PC-9 (cell line): ENCODE measurements at regions of chr1 and their contacts with region 1.

Region 1: GRCh38 chr1:38026592-38027200 is 14.2 kb downstream of the UTP11 start:
- DNase-seq: peak; percentile 58 to 75
- H3K4me3 ChIP-seq: no peak overlapping the region
- H3K27ac ChIP-seq: no peak overlapping the region
- H3K4me1 ChIP-seq: peaks cover 48% of the 10 kb centered on the region
- H3K27me3 ChIP-seq: no peaks in the 10 kb centered on the region
- CTCF ChIP-seq: peak; percentile 91

Region 2: GRCh38 chr1:36232212-36233095 is 1794.2 kb before region 1 on chr1:
- CTCF ChIA-PET with region 1: interaction called, 11 read pairs
- POLR2A ChIA-PET with region 1: no interaction called
- intact Hi-C with region 1: no loop called
- DNase-seq: no peak
- H3K4me3 ChIP-seq: no peak overlapping the region
- H3K27ac ChIP-seq: no peak overlapping the region
- H3K4me1 ChIP-seq: no peaks in the 10 kb centered on the region
- H3K27me3 ChIP-seq: no peaks in the 10 kb centered on the region
- CTCF ChIP-seq: no peak

Region 3: GRCh38 chr1:38138498-38139233 is 112.0 kb after region 1 on chr1:
- CTCF ChIA-PET with region 1: no interaction called
- POLR2A ChIA-PET with region 1: no interaction called
- intact Hi-C with region 1: loop called (anchors 5 kb)
- DNase-seq: peak; percentile 99
- H3K4me3 ChIP-seq: no peak overlapping the region; the same call in 1 of the 2 replicates
- H3K27ac ChIP-seq: peak overlapping the region; percentile 48
- H3K4me1 ChIP-seq: peaks cover 58% of the 10 kb centered on the region
- H3K27me3 ChIP-seq: no peaks in the 10 kb centered on the region
- CTCF ChIP-seq: no peak

Region 4: GRCh38 chr1:38152351-38153065 is 125.8 kb after region 1 on chr1:
- CTCF ChIA-PET with region 1: no interaction called
- POLR2A ChIA-PET with region 1: no interaction called
- intact Hi-C with region 1: loop called (anchors 2 kb)
- DNase-seq: no peak
- H3K4me3 ChIP-seq: no peak overlapping the region
- H3K27ac ChIP-seq: no peak overlapping the region
- H3K4me1 ChIP-seq: no peaks in the 10 kb centered on the region
- H3K27me3 ChIP-seq: peaks cover 47% of the 10 kb centered on the region
- CTCF ChIP-seq: peak; percentile 58; the same call in 1 of the 2 replicates

Region 5: DNA sequence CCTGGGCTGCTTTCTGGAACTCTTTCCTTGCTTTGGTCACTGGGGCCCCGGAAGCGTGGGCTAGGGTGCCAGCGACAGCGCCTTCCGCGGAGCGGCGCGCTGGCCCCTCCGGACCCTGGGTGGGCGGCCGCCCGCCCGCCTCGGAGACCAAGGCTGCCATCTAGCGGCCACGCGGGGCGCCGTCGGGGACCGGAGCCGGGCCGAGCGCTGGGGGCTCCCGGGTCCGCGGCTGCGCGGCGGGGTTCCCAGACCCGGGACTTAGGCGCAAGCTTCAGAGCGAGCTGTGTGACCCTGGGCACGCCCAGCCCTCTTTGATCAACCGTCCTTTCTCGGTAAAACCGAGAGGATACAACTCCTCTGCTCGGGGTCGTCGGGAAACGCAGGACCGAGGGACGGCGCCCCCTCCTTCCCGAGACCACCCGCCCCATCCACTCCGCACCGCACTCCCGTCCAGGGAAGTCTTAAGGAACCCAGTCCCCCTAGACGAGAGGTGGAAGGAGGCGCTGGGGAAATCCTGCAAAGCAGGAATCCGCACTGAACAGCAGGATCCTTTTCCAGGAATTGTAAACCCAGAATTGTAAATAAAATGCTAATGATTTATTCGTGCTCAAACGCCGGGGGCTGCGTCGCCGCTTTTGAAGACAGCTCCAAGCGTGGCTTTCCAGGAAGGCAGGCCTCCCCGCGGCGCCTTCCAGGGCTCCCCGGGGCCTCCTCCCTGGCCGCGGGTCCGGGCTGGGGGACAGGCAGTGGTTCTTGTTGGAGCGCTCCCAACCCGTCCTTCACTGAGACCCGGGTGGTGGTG is 791.7 kb after region 1 on chr1:
- CTCF ChIA-PET with region 1: interaction called, 5 read pairs
- POLR2A ChIA-PET with region 1: no interaction called
- intact Hi-C with region 1: loop called (anchors 5 kb)
- DNase-seq: peak in 1 of 2 experiments; percentile 27
- H3K4me3 ChIP-seq: no peak overlapping the region
- H3K27ac ChIP-seq: no peak overlapping the region
- H3K4me1 ChIP-seq: no peaks in the 10 kb centered on the region
- H3K27me3 ChIP-seq: peaks cover 96% of the 10 kb centered on the region
- CTCF ChIP-seq: peak; percentile 56

Region 6: DNA sequence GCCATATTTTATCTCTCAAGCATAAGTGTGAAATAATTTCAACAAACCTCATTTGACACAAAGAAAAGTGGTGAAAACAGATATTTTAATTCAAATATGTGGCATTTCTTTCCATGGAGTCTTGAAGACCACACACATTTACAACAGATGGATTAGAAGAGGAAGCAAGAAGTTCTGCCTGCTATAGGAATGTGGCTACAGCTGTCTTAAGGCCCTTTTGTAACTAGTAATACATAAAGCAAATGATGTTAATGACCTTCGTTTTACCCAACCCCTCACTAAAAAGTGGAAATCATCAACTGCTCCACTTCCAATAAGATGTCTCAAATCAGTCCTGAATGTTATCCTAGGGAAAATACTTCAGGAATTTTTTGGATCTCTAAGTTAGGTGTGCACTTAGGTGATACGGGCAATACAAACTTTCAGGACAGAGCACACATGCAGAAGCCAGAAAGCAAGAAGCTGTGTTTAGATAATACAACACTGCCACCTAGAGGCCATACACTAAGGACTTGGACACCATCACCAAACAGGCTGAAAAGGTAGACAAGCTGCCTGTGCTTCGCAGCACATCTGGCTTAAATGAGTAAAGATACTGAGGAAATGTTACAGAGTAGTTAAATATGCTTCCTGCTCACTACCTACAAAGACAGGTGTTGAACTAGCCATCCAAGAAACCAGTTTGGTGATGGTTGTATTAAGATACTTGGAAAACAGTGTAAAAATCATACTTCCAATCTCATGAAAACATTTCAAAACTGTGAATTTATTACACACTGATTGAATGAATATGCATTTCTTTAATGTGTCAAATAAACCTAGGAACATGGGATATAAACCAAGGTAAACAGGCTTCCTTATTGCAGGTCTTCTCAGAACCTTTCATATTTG is 808.5 kb after region 1 on chr1:
- CTCF ChIA-PET with region 1: interaction called, 3 read pairs
- POLR2A ChIA-PET with region 1: no interaction called
- intact Hi-C with region 1: loop called (anchors 1 kb)
- DNase-seq: peak; percentile 51 to 73
- H3K4me3 ChIP-seq: no peak overlapping the region
- H3K27ac ChIP-seq: no peak overlapping the region
- H3K4me1 ChIP-seq: no peaks in the 10 kb centered on the region
- H3K27me3 ChIP-seq: peaks cover 24% of the 10 kb centered on the region
- CTCF ChIP-seq: peak; percentile 89

Region 7: GRCh38 chr1:39091845-39092645 is 1065.3 kb after region 1 on chr1:
- CTCF ChIA-PET with region 1: no interaction called
- POLR2A ChIA-PET with region 1: no interaction called
- intact Hi-C with region 1: loop called (anchors 5 kb)
- DNase-seq: peak; percentile 70 to 71
- H3K4me3 ChIP-seq: no peak overlapping the region
- H3K27ac ChIP-seq: no peak overlapping the region
- H3K4me1 ChIP-seq: peaks cover 12% of the 10 kb centered on the region
- H3K27me3 ChIP-seq: no peaks in the 10 kb centered on the region
- CTCF ChIP-seq: peak; percentile 84